ENCODE measurements at regions of chr2 and their contacts with region 1.

Region 1: GRCh38 chr2:112645310-112646101 is at the start of gene SLC20A1:
- DNase-seq: peak; percentile 100
- ATAC-seq: peak; percentile 91
- H3K4me3 Mint-ChIP-seq: peak within 1 kb of the TSS; percentile 97
- H3K27ac Mint-ChIP-seq: peak within 1 kb of the TSS; percentile 87
- H3K4me1 Mint-ChIP-seq: peaks cover 63% of the 10 kb centered on the region
- H3K27me3 Mint-ChIP-seq: no peaks in the 10 kb centered on the region
- total RNA-seq, gene SLC20A1: 105 to 113 TPM

Region 2: GRCh38 chr2:112584134-112584890 is 61.2 kb before region 1 on chr2 and contains the start of gene CHCHD5:
- POLR2A ChIA-PET with region 1: interaction called, 10 read pairs
- DNase-seq: peak; percentile 91
- ATAC-seq: peak; percentile 90
- H3K4me3 Mint-ChIP-seq: peak within 1 kb of the TSS; percentile 97
- H3K27ac Mint-ChIP-seq: peak within 1 kb of the TSS; percentile 99
- H3K4me1 Mint-ChIP-seq: peaks cover 29% of the 10 kb centered on the region
- H3K27me3 Mint-ChIP-seq: no peaks in the 10 kb centered on the region
- total RNA-seq, gene CHCHD5: 32.1 to 35.2 TPM

Region 3: GRCh38 chr2:112661656-112662305 is 16.3 kb after region 1 on chr2:
- POLR2A ChIA-PET with region 1: interaction called, 12 read pairs
- DNase-seq: no peak
- ATAC-seq: no peak
- H3K4me3 Mint-ChIP-seq: no peak overlapping the region
- H3K27ac Mint-ChIP-seq: no peak overlapping the region
- H3K4me1 Mint-ChIP-seq: peaks cover 51% of the 10 kb centered on the region
- H3K27me3 Mint-ChIP-seq: no peaks in the 10 kb centered on the region

Region 4: GRCh38 chr2:112699984-112700667 is 54.6 kb after region 1 on chr2:
- POLR2A ChIA-PET with region 1: no interaction called
- DNase-seq: no peak
- ATAC-seq: no peak
- H3K4me3 Mint-ChIP-seq: no peak overlapping the region
- H3K27ac Mint-ChIP-seq: no peak overlapping the region
- H3K4me1 Mint-ChIP-seq: peaks cover 9% of the 10 kb centered on the region
- H3K27me3 Mint-ChIP-seq: peaks cover 52% of the 10 kb centered on the region